Esophagus squamous epithelium (tissue), 5 donors: ENCODE measurements at regions of chr4 and their contacts with region 1.

Region 1: DNA sequence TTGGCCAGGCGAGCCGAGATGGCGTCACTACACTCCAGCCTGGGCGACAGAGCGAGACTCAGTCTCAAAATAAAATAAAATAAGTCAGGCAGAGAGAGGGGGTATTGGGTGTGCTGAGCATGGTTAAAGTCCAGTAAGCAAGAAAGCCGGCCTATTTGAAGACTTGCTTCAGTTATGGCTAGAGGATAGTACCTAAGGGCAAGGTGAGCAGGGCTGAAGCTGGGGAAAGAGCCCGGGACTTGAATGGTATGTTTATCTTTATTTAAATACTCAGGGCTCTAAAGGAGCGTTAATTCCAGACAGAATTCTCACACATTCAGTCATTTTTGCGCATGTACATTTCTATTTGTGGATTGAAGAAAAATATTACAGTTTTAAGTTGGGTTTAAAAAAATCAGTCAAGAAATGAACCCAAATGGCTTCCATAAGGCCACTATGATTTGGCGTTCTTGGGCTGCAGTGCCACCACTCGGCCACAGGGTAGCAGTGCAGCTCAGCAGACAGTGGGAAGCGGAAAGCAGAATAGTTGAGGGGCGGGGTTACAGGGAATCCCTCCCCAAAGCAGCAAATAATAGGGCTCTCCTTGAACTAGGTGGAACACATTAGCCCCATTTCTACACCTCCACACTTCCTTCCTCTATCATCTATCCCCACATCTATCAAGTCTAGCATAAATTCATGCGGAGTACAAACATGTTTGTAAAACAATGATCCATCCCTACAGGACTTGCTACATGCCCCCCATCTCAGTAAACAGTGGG is 37.2 kb upstream of the SH3D19 start:
- DNase-seq: no peak
- H3K4me3 ChIP-seq: no peak overlapping the region
- H3K27ac ChIP-seq: no peak overlapping the region
- H3K4me1 ChIP-seq: peaks cover 0 to 12% (median 0%) of the 10 kb centered on the region in 3 donors
- H3K27me3 ChIP-seq: no peaks in the 10 kb centered on the region
- CTCF ChIP-seq: peak; percentile 64 to 99 (median 98)
- POLR2A ChIP-seq: no peak

Region 2: GRCh38 chr4:151129801-151130200 is 232.8 kb before region 1 on chr4:
- intact Hi-C with region 1: loop called (anchors 10 kb)
- DNase-seq: no peak
- H3K4me3 ChIP-seq: no peak overlapping the region
- H3K27ac ChIP-seq: no peak overlapping the region
- H3K4me1 ChIP-seq: no peaks in the 10 kb centered on the region
- H3K27me3 ChIP-seq: no peaks in the 10 kb centered on the region
- CTCF ChIP-seq: no peak
- POLR2A ChIP-seq: no peak

Region 3: DNA sequence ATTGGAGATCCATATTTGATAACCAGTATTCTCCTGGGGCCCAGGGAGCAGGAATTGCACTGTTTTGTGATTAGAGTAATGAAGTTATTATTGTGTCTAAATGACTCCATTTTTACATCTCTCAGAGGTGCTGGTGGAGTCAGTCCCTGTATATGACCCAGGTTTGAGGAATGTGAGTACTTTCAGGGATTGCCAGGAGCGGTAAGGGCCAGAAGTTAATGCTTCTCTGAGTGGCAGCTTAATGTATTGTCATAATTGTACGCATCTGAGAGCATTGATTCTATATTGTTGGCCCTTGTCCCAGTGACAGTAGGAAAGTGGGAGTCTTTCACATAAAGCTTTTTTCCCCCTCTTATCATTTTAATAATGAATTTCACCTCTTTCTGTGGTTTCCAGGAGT is 252.0 kb after region 1 on chr4:
- intact Hi-C with region 1: no loop called
- DNase-seq: no peak
- H3K4me3 ChIP-seq: no peak overlapping the region
- H3K27ac ChIP-seq: no peak overlapping the region
- H3K4me1 ChIP-seq: no peaks in the 10 kb centered on the region
- H3K27me3 ChIP-seq: no peaks in the 10 kb centered on the region
- CTCF ChIP-seq: no peak
- POLR2A ChIP-seq: no peak

Region 4: DNA sequence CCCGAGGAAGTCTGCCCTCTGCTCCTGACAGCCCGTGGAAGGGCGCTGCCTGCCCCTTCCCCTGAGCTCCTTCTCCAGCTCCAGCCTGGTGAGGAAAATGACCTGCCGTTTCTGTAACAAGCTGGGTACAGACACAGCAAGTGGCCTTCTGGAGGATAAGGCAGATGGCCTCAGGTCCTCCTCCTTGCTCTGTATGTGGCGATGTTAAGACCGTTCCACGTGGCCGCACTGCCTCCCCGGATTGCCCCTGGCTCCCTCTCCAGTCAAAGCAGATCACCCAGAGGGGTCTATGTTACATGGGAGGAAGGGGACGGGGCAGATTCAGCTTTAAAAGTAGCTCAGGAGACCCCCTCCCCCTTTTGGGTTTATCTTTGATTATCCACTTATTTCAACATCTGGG is 478.5 kb after region 1 on chr4:
- intact Hi-C with region 1: no loop called
- DNase-seq: no peak
- H3K4me3 ChIP-seq: no peak overlapping the region
- H3K27ac ChIP-seq: no peak overlapping the region
- H3K4me1 ChIP-seq: no peaks in the 10 kb centered on the region
- H3K27me3 ChIP-seq: peaks cover 0 to 6% (median 0%) of the 10 kb centered on the region in 4 donors
- CTCF ChIP-seq: no peak
- POLR2A ChIP-seq: no peak